Activated T-helper 1 cell treated with anti-CD3 and anti-CD28 coated beads, Interleukin-12 subunit alpha, Interleukin-12 subunit beta, Interleukin-2, Interleukin-4 antibody, amounts not matched to agents 30 ng/mL and 10 ng/mL and 1 ng/mL, durations not matched to agents 14 hours and 24 hours and 36 hours (primary cell): ENCODE measurements at regions of chr19 and their contacts with region 1.

Region 1: GRCh38 chr19:19138169-19138981 is at the start of gene TMEM161A:
- DNase-seq: peak; percentile 97
- H3K4me3 Mint-ChIP-seq: peak within 1 kb of the TSS; percentile 92
- H3K27ac Mint-ChIP-seq: peak within 1 kb of the TSS; percentile 93
- H3K4me1 Mint-ChIP-seq: peaks cover 22% of the 10 kb centered on the region
- H3K27me3 Mint-ChIP-seq: peaks cover 3% of the 10 kb centered on the region
- total RNA-seq, gene TMEM161A: 46.0 and 48.9 TPM in 2 replicates

Region 2: DNA sequence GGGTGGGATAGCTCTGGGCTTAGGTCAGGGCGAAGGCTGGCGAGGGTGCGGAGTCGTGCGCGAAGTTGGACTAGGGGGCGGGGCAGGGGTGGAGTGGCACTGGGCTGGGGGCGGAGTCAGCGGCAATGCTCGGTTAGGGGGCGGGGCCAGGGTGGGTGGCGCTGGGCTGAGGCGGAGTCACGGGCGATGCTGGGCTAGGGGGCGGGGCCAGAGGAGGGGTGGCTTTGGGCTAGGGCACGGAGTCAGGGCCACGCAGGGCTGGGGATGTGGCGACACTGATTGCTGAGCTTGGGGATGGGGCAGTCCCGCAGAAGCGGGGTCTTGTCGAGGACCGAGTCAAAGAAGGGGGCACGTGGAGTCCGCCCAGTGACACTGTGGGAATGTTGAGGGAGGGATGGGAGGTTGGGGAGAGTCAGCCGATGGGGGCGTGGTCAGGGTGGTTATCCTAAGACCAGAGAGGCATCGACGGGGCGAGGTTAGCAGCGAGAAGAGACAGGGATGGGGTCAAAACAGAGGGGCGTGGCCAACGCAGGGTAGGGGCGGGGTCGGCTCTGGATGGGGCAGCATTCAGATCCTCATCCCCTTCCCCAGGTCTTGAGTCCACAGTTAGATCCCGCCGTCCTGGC is 206.0 kb before region 1 on chr19:
- intact Hi-C with region 1: loop called (anchors 1 kb)
- DNase-seq: peak; percentile 67
- H3K4me3 Mint-ChIP-seq: peak overlapping the region; percentile 73
- H3K27ac Mint-ChIP-seq: no peak overlapping the region
- H3K4me1 Mint-ChIP-seq: peaks cover 5% of the 10 kb centered on the region
- H3K27me3 Mint-ChIP-seq: peaks cover 8% of the 10 kb centered on the region

Region 3: DNA sequence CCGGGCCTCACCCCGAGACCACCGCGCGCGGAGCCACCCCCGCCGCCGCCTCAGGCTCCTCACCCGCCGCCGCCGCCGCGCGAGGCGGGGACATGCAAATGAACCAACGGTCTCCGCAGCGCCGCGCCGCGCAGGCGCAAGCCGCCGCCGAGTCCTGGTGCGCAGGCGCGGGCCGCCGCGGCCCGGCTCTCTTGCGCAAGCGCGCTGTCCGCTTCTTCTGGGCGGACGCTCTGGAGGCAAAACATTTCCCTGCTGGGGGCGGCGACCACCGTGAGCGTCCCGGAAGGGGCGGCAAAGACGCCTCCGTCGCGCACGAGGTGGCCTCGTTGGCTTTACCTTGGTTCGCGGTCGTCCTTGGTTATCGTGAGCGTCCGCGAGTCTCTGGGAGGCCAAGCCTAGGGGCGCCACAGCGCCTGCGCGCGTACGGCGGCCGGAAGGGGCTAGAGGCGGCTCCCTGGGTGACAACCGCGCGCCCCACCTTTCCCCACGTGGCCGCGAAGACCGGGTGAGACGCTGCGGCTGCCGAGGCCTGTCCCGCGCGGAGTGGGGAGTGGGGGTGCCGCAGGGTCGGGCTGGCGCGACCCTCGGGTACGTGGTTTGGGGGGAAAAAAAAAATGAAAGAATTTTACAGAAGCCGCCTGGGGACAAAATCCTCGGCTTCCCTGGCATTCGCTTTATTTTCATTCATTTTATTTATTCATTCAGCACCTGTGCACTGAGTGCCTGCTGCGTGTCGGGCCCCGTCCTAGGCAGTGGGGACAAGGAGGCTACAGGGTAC is 104.8 kb before region 1 on chr19 and contains the starts of genes ARMC6 and SUGP2:
- intact Hi-C with region 1: loop called (anchors 1 kb)
- DNase-seq: peak; percentile 89
- H3K4me3 Mint-ChIP-seq: peak within 1 kb of the TSS; percentile 98
- H3K27ac Mint-ChIP-seq: peak within 1 kb of the TSS; percentile 98
- H3K4me1 Mint-ChIP-seq: peaks cover 25% of the 10 kb centered on the region
- H3K27me3 Mint-ChIP-seq: no peaks in the 10 kb centered on the region
- total RNA-seq, gene ARMC6: 54.9 and 56.5 TPM in 2 replicates
- total RNA-seq, gene SUGP2: 114 and 128 TPM in 2 replicates

Region 4: DNA sequence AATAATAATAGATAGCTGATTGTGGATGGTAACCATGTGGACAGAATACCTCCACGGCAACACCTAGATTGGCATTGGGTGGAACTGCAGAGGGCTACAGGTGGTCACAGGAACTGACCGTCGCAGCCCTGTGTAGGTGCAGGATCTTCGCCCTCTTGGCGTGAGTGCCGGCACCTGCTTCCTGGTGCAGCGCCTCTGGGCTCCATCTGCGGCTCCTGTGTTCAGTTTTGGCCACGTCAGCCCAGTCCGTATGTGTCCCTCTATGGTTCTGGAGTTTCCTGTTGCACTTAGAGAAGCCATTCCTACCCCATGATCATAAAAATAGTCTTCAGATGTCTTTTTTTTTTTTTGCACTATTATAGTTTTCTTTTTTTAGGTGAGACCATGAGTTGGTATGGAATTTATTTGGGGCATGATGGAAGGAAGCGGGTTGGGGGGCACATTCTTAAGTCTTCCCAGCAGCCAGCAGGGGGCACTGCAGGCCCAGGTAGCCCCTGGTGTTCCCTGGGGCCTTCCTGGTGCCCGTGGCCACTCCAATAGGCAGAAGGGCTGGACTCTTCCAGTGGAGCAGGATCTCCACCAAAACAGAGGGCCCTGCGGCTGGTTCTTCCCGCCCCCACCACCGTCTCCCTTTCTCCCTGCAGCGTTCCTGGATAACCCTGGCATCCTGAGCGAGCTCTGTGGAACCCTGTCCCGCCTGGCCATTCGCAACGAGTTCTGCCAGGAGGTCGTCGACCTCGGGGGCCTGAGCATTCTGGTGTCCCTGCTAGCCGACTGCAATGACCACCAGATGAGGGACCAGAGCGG is 84.7 kb before region 1 on chr19:
- intact Hi-C with region 1: loop called (anchors 2 kb)
- DNase-seq: no peak
- H3K4me3 Mint-ChIP-seq: no peak overlapping the region
- H3K27ac Mint-ChIP-seq: no peak overlapping the region
- H3K4me1 Mint-ChIP-seq: no peaks in the 10 kb centered on the region
- H3K27me3 Mint-ChIP-seq: no peaks in the 10 kb centered on the region

Region 5: GRCh38 chr19:19063183-19064097 is 74.9 kb before region 1 on chr19 and contains the start of gene SLC25A42:
- intact Hi-C with region 1: loop called (anchors 1 kb)
- DNase-seq: peak; percentile 99
- H3K4me3 Mint-ChIP-seq: peak within 1 kb of the TSS; percentile 84
- H3K27ac Mint-ChIP-seq: peak within 1 kb of the TSS; percentile 62
- H3K4me1 Mint-ChIP-seq: peaks cover 29% of the 10 kb centered on the region
- H3K27me3 Mint-ChIP-seq: no peaks in the 10 kb centered on the region
- total RNA-seq, gene SLC25A42: 7.8 and 10.8 TPM in 2 replicates

Region 6: DNA sequence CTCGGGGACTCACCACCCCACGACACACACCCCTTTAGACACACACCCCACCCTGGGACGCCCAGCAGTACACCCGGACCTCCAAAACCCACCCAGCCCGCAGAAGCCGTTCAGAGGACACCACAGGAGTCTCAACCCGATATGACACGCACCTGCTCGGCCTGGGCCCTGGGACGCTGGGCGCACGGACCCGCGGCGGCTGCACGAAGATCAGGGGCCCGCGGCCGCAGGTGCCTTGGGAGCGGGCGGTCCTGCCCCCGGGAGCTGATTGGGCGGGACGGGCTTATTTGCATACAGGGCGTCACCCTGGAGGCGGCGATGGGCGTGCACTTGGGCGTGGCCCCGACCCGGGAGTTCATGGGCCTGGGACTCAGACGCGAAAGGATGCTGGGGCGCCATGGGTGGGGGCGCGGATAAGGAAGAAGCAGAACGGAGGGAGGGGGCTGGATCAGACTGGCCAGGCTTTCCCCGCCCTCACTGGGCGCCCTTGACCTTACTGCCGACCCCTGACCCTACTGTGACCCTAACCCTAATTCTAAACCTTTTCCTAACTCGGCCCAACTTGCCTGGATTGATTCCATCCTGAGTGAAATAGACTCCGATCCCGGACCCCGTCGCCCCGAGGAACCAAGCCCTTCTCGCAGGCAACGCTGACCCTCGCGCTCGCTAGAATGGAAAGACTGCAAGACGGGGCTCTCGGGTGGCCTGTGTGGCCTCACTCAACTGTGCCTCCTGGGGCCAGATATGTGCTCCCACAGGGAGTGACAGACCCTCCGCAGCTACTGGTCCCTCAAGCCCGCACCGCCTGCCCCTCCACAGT is 31.9 kb after region 1 on chr19 and contains the start of gene MEF2B:
- intact Hi-C with region 1: loop called (anchors 1 kb)
- DNase-seq: peak; percentile 72
- H3K4me3 Mint-ChIP-seq: peak within 1 kb of the TSS; percentile 47
- H3K27ac Mint-ChIP-seq: no peak within 1 kb of the TSS
- H3K4me1 Mint-ChIP-seq: peaks cover 16% of the 10 kb centered on the region
- H3K27me3 Mint-ChIP-seq: peaks cover 3% of the 10 kb centered on the region
- total RNA-seq, gene MEF2B: 1.7 and 2.2 TPM in 2 replicates

Region 7: DNA sequence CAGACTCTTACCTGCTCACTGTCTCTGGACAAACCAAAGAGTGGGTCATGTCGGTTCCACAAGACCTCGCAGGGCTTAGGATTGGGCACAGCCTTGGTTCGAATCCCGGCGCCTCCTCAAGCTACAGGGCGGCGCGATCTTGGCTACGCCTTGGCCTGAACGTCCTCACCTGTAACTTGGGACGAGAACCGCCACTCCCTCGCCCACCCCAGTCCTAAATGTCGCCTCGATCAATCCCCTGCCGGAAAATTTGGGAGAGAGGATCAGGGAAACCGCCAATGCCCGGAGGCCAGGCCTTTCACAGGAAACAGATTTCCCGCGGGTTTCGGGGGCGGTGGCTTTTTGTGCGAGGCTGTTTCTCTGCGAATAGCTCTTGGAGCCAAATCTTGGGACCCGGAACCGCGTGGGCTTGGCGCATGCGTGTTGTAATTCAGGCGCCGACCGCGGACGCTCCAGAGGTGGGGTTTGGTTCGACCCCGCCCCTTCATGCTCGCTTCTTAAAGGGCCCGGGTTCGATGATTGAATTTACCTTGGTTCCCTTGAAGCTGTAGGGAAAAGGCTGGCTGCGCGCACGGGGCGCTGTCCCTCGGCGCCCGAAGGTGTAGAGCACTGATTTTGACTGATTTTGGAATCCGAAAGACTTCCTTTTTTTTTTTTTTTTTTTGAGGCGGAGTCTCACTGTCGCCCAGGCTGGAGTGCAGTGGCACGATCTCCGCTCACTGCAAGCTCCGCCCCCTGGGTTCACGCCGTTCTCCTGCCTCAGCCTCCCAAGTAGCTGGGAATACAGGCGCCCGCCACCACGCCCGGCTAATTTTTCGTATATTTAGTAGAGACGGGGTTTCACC is 64.9 kb after region 1 on chr19 and contains the start of gene NR2C2AP:
- intact Hi-C with region 1: loop called (anchors 1 kb)
- DNase-seq: peak; percentile 90
- H3K4me3 Mint-ChIP-seq: peak within 1 kb of the TSS; percentile 95
- H3K27ac Mint-ChIP-seq: peak within 1 kb of the TSS; percentile 89
- H3K4me1 Mint-ChIP-seq: peaks cover 20% of the 10 kb centered on the region
- H3K27me3 Mint-ChIP-seq: peaks cover 2% of the 10 kb centered on the region
- total RNA-seq, gene NR2C2AP: 50.9 and 52.0 TPM in 2 replicates